Activated CD4-positive, alpha-beta memory T cell treated with anti-CD3 and anti-CD28 coated beads, Interleukin-2, amount 10 ng/mL, durations not matched to agents 7 days and 5 days (primary cell): ENCODE measurements at regions of chr11 and their contacts with region 1.

Region 1: GRCh38 chr11:34174412-34175041 is 69.1 kb downstream of the NAT10 start:
- DNase-seq: peak; percentile 84
- H3K4me3 Mint-ChIP-seq: peak overlapping the region; percentile 44
- H3K27ac Mint-ChIP-seq: no peak overlapping the region
- H3K4me1 Mint-ChIP-seq: peaks cover 24% of the 10 kb centered on the region
- H3K27me3 Mint-ChIP-seq: peaks cover 3% of the 10 kb centered on the region

Region 2: DNA sequence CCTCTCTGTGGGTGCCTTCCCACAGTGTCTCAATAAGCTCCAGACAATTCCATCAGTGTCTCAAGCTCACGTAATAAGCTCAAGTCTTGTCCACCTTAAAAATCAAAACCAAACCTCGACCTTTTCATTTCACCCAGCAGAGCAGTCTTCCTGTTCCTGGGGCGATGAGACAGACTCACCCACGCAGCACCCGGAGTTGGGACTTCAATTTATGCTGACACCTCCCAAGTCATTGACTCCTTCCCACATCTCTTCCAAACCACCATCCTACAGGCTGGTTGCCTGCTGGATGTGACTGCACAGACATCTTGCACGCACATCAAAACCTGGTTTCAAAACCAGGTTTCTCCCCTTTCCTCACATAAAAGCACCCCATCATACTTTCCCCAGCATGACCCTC is 355.2 kb before region 1 on chr11:
- CTCF ChIA-PET with region 1: no interaction called
- POLR2A ChIA-PET with region 1: no interaction called
- DNase-seq: no peak
- H3K4me3 Mint-ChIP-seq: no peak overlapping the region
- H3K27ac Mint-ChIP-seq: no peak overlapping the region
- H3K4me1 Mint-ChIP-seq: no peaks in the 10 kb centered on the region
- H3K27me3 Mint-ChIP-seq: peaks cover 40% of the 10 kb centered on the region

Region 3: GRCh38 chr11:34105079-34105956 is 69.2 kb before region 1 on chr11 and contains the start of gene NAT10:
- CTCF ChIA-PET with region 1: interaction called, 14 read pairs
- POLR2A ChIA-PET with region 1: interaction called, 4 read pairs
- DNase-seq: peak; percentile 98
- H3K4me3 Mint-ChIP-seq: peak within 1 kb of the TSS; percentile 96
- H3K27ac Mint-ChIP-seq: peak within 1 kb of the TSS; percentile 96
- H3K4me1 Mint-ChIP-seq: peaks cover 58% of the 10 kb centered on the region
- H3K27me3 Mint-ChIP-seq: no peaks in the 10 kb centered on the region
- total RNA-seq, gene NAT10: 52.9 to 57.8 TPM

Region 4: DNA sequence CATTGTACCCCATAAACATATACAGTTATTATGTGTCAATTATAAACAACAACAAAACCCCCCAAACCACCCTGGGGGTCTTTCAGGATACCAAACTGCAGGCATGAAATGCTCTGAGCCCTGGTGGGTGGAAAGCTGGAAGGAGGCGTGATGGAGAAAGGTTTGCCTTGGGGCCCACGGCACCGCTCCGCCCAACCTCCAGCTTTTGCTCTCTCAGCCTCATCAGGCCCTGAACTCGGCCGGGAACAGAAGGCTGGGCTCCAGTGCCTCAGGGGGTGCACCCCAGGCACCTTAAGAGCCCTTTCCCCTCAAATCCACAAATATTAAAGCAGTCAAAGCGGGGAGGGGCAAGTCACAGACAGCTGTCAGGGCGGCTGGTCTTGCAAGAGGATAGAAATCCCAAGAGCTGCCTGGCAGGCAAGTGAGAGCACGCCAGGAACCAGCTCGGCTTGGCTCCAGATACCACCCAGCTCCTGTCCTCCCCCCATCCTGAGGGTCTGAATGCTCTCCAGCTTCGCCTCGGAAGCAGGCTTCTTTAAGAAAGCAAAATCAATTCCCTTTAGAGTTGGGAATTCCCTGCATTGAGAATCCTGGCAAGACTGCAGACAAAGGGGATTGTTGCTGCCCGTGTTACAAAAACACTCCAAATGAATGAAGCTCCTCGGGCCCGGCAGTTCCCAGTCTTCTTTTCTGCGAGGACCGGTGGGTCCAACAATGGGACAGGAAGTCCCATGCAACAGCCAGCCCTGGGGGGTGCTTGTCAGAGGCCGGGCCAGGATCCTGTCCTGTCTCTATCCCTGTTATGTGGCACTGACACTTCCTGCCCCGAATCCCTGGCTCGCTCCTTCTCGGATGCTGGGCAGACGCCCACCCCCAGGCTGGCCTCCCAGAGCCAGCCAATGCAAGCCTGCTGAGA is 11.7 kb after region 1 on chr11:
- CTCF ChIA-PET with region 1: interaction called, 18 read pairs
- POLR2A ChIA-PET with region 1: no interaction called
- DNase-seq: no peak
- H3K4me3 Mint-ChIP-seq: no peak overlapping the region
- H3K27ac Mint-ChIP-seq: no peak overlapping the region
- H3K4me1 Mint-ChIP-seq: peaks cover 6% of the 10 kb centered on the region
- H3K27me3 Mint-ChIP-seq: peaks cover 2% of the 10 kb centered on the region

Region 5: DNA sequence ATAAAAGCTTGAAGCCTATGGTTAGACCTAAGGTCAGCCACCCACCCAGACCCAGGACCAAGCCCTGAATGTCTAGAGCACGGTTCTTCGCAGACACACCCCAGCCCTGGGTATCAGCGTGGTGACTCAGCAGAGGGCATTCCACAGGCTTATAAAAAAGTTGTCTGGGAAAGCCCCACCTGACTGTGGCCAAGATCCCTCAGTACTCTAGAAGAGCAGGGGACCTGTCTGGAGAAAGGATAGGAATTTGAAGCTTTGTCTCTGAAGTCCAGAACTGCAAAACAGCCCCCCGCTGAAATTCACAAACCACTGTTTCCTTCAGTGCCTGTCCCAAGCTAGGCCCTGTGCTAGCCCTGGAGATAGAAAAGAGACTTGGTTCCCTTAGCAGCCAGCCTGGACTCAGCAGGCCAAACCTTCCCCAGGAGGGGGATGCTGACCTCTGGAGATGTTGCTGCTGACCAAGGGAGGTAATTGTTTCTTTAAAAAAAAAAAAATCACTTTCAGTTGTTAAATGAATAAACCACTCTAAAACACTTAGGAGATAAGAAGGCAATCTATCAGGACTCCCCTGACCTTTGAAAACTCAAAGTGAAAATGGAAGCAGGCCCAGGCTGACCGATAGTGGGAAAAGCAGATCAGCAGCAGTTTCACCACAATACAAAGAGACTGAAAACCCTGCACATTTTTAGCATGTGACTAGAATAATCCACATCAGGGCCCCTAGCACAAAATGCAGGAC is 69.4 kb after region 1 on chr11:
- CTCF ChIA-PET with region 1: interaction called, 16 read pairs
- POLR2A ChIA-PET with region 1: interaction called, 3 read pairs
- DNase-seq: peak; percentile 61
- H3K4me3 Mint-ChIP-seq: no peak overlapping the region
- H3K27ac Mint-ChIP-seq: peak overlapping the region; percentile 53
- H3K4me1 Mint-ChIP-seq: peaks cover 82% of the 10 kb centered on the region
- H3K27me3 Mint-ChIP-seq: peaks cover 3% of the 10 kb centered on the region

Region 6: GRCh38 chr11:34345991-34346480 is 171.5 kb after region 1 on chr11:
- CTCF ChIA-PET with region 1: interaction called, 24 read pairs
- POLR2A ChIA-PET with region 1: no interaction called
- DNase-seq: no peak
- H3K4me3 Mint-ChIP-seq: no peak overlapping the region
- H3K27ac Mint-ChIP-seq: no peak overlapping the region
- H3K4me1 Mint-ChIP-seq: peaks cover 5% of the 10 kb centered on the region
- H3K27me3 Mint-ChIP-seq: no peaks in the 10 kb centered on the region

Region 7: DNA sequence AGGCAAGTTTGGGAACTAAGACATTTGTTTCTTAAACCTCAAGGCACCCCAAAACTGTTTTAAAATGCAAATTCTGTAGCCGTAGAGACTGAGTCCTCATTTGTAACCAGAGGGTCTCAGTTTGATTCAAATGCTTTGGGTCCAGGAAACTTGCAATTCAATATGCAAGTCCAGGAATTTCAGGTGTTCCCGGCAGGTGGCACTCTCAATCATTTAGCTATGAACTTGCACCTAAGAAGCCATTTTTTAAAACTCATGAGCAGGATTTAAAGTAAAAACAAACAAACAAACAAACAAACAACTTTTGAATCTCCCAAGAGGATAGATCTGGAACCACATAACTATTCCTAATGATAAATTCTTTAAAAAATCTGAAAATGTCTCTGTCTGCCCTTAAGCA is 192.0 kb after region 1 on chr11:
- CTCF ChIA-PET with region 1: interaction called, 32 read pairs
- POLR2A ChIA-PET with region 1: interaction called, 3 read pairs
- DNase-seq: peak; percentile 24
- H3K4me3 Mint-ChIP-seq: no peak overlapping the region
- H3K27ac Mint-ChIP-seq: no peak overlapping the region
- H3K4me1 Mint-ChIP-seq: peaks cover 8% of the 10 kb centered on the region
- H3K27me3 Mint-ChIP-seq: peaks cover 42% of the 10 kb centered on the region

Region 8: GRCh38 chr11:34633990-34634693 is 459.6 kb after region 1 on chr11:
- CTCF ChIA-PET with region 1: no interaction called
- POLR2A ChIA-PET with region 1: no interaction called
- DNase-seq: no peak
- H3K4me3 Mint-ChIP-seq: no peak overlapping the region
- H3K27ac Mint-ChIP-seq: peak overlapping the region; percentile 33
- H3K4me1 Mint-ChIP-seq: peaks cover 15% of the 10 kb centered on the region
- H3K27me3 Mint-ChIP-seq: peaks cover 19% of the 10 kb centered on the region

Region 9: DNA sequence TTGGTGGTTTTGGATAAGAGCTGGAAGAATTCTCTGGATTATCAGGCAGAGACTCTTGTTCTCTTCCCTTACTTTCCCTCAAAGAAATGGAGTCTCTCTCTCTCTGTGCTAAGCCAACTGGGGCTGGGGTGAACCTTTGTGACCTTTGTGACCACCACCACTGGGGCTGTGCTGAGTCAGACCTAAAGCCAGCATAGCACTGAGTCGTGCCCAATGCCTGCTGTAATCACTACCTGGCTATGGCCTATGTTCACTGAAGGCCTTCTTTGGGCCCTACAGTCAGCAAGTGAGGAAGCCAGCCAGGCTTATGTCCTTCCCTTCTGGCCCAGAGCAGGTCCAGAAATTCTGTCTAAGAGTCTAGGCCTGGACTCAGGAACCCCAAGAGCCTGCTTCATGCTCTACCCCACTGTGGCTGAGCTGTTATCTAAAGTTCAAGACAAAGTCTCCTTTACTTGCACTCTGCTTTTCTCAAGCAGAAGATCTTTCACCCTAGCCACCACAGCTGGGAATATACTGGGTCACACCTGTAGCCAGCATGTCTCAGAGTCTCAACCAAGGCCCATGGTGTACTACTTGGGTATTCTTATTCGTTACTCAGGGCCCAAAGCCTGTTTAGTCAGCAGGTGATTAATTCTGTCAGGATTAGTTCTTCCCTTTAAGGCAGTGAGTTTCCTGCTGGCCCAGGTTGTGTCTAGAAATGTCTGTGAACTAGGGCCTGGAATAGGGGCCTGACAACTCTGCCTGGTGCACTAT is 532.4 kb after region 1 on chr11:
- CTCF ChIA-PET with region 1: no interaction called
- POLR2A ChIA-PET with region 1: no interaction called
- DNase-seq: no peak
- H3K4me3 Mint-ChIP-seq: no peak overlapping the region
- H3K27ac Mint-ChIP-seq: no peak overlapping the region
- H3K4me1 Mint-ChIP-seq: no peaks in the 10 kb centered on the region
- H3K27me3 Mint-ChIP-seq: peaks cover 18% of the 10 kb centered on the region

Region 10: DNA sequence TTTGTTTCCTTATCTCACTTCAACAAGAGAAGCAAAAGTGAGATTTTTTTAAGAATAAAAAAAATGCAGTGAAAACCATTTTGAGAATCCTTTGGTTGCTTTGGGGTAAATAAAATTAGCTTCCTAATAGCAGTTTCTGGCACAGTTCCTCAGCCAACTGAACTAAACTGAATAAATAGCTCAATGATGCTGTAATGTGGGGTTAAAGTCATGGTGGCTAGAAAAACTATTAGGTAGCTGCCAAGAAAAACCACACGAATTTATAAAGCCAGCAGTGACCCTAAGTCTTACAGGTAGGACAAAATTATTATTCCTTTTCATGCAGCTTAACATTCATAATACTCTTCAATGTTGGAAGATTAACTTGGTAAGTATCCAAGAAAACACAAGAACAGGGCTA is 599.3 kb after region 1 on chr11:
- CTCF ChIA-PET with region 1: no interaction called
- POLR2A ChIA-PET with region 1: no interaction called
- DNase-seq: no peak
- H3K4me3 Mint-ChIP-seq: no peak overlapping the region
- H3K27ac Mint-ChIP-seq: no peak overlapping the region
- H3K4me1 Mint-ChIP-seq: no peaks in the 10 kb centered on the region
- H3K27me3 Mint-ChIP-seq: peaks cover 34% of the 10 kb centered on the region